OCI-LY7 (cell line): ENCODE measurements at regions of chr2 and their contacts with region 1.

Region 1: GRCh38 chr2:38602732-38603401 is at the start of gene HNRNPLL:
- DNase-seq: peak; percentile 94
- H3K4me3 ChIP-seq: peak within 1 kb of the TSS; percentile 81
- H3K27ac ChIP-seq: peak within 1 kb of the TSS; percentile 41
- H3K4me1 ChIP-seq: peaks cover 57% of the 10 kb centered on the region
- CTCF ChIP-seq: no peak
- total RNA-seq, gene HNRNPLL: 7.2 and 7.6 TPM in 2 replicates

Region 2: GRCh38 chr2:38214209-38214717 is 388.6 kb before region 1 on chr2:
- CTCF ChIA-PET with region 1: no interaction called
- POLR2A ChIA-PET with region 1: no interaction called
- intact Hi-C with region 1: no loop called
- DNase-seq: no peak
- H3K4me3 ChIP-seq: no peak overlapping the region
- H3K27ac ChIP-seq: no peak overlapping the region
- H3K4me1 ChIP-seq: no peaks in the 10 kb centered on the region
- CTCF ChIP-seq: no peak

Region 3: DNA sequence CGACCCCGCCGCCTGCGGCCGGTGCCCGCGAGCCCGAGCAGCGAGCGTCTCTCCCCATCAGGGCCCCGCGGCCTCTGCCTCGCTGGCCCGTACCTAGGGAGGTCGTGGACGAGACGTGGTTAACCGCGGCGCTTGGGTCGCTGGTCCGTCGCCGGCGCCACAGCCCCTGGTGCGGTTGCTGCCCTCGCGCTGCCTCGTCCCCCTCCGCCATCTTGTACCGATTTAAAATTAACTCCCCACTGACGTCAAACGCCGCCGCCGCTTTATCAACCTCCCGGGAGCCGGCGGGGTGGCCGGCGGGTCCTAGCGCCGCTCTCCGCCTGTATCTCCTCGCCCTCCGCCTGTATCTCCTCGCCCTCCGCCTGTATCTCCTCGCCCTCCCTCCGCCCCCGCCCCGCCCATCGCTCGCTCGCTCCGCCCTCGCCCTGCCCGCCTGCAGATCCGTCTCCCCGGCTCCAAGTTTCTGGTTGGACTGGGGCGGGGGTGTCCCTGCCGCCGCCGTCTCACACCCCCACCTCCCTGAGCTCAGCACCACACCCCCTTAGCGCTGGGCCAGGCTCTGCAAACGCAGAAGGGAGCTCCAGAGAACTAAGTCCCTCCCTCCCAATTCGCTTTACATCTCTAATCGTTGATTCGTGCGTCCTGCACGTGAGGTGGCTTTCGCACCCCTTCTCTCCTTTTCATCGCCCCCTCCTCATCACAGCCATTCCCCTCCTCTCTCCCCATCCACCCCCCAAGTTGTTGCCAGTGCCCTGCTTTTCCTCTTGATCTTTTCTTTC is 225.6 kb before region 1 on chr2 and contains the start of gene ATL2:
- CTCF ChIA-PET with region 1: no interaction called
- POLR2A ChIA-PET with region 1: interaction called, 4 read pairs
- intact Hi-C with region 1: loop called (anchors 2 kb)
- DNase-seq: peak; percentile 96
- H3K4me3 ChIP-seq: peak within 1 kb of the TSS; percentile 88
- H3K27ac ChIP-seq: peak within 1 kb of the TSS; percentile 69
- H3K4me1 ChIP-seq: peaks cover 65% of the 10 kb centered on the region
- CTCF ChIP-seq: no peak
- total RNA-seq, gene ATL2: 142 and 166 TPM in 2 replicates

Region 4: DNA sequence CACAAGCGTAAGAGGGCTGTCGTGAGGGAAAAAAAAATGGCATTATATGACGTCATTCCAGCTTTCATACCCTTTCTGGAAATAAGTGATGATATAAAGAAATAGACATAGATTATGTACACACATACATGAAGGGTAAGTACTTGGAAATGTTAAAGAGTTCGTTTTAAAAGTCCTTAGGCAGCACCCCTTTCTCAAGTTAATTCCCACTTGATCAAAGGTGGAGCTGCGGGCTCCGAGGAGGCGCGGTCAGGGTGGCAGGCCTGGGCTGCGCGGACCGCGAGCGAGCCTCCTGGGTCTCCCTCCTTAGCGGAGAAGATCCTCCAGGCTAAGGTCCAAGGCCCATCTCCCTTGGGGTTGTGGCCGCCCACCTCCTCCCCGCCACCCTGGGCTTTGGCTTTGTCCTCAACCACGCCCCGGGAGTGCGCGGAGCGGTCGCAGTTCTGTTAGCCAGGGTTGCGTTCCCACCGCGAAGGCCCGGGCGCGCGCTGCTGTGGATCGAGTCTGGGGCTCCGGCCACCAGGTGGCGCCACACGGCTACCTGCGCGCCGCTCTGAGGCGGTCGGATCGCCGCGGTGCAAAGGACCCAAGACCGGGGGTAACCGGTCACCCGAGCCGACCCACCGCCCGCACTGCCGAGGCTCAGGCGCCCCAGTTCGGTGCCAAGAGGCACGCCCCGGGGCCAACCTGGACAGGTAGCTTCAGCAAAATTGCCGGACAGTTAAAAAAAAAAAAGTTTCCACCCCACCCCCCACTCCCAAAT is 66.9 kb before region 1 on chr2:
- CTCF ChIA-PET with region 1: no interaction called
- POLR2A ChIA-PET with region 1: interaction called, 13 read pairs
- intact Hi-C with region 1: loop called (anchors 2 kb)
- DNase-seq: peak; percentile 87
- H3K4me3 ChIP-seq: peak overlapping the region; percentile 62
- H3K27ac ChIP-seq: no peak overlapping the region
- H3K4me1 ChIP-seq: peaks cover 43% of the 10 kb centered on the region
- CTCF ChIP-seq: peak; percentile 87

Region 5: GRCh38 chr2:38634684-38635083 is 31.8 kb after region 1 on chr2:
- CTCF ChIA-PET with region 1: no interaction called
- POLR2A ChIA-PET with region 1: interaction called, 4 read pairs
- intact Hi-C with region 1: loop called (anchors 1 kb)
- DNase-seq: peak; percentile 65
- H3K4me3 ChIP-seq: peak overlapping the region; percentile 22
- H3K27ac ChIP-seq: peak overlapping the region; percentile 0
- H3K4me1 ChIP-seq: peaks cover 29% of the 10 kb centered on the region
- CTCF ChIP-seq: no peak

Region 6: DNA sequence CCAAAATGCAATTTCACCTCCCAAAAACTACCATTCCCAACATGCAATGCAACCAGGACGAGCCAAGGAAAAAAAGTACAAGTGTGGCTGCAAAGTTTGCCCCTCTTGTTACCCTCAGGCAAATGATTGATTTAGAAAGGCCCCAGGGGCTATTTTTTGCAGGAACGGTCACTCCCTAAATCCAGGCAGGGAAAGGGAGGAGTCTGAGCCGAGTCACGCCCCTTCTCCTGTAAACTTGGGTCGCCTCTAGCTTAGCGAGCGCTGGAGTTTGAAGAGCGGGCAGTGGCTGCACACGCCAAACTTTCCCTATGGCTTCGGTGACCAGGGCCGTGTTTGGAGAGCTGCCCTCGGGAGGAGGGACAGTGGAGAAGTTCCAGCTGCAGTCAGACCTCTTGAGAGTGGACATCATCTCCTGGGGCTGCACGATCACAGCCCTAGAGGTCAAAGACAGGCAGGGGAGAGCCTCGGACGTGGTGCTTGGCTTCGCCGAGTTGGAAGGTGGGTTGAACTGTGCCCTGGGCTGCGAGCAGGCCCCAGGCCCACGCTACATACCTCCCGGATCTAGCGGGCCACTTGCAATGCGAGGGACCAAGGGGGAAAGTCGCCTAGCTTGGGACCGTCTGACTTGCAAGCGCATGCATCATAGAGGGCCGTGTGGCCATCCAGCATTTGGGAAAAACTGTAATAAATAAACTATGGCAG is 63.1 kb after region 1 on chr2 and contains the start of gene GALM:
- CTCF ChIA-PET with region 1: interaction called, 4 read pairs
- POLR2A ChIA-PET with region 1: interaction called, 7 read pairs
- intact Hi-C with region 1: loop called (anchors 1 kb)
- DNase-seq: peak; percentile 70
- H3K4me3 ChIP-seq: peak within 1 kb of the TSS; percentile 70
- H3K27ac ChIP-seq: peak within 1 kb of the TSS; percentile 5
- H3K4me1 ChIP-seq: peaks cover 8% of the 10 kb centered on the region
- CTCF ChIP-seq: no peak
- total RNA-seq, gene GALM: 2.9 and 5.5 TPM in 2 replicates

Region 7: DNA sequence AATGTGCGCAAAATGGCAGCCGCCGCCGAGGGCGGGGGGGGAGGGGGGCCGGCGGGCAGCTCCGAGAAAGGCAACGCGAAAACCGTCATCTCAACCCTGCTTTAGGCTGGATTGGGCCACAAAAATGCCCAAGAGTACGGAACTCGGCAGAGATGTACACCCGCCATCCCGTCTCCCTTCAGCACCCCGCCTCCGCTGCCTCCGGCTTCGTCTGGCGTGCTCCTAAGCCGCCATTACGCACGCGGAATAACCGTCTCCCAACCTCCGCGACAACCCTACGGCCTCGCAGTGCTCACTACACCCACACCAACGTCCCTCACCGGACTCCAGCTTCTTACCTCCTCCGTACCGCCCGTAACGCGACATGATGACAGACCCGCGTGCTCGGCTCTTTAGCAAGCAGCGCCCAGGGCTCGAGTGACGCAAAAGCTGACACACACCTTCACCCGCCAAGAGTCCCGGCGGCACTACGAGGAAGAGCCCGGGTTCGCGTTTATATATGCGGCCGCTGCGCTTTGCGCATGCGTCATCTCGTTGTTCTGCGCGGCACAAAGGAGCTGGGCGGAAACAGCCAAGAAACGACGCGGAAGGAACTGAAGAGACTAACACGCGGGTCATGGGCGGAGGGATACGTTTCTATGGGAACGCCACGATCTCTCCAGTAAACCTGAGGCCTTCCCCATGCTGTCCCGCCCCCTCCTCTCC is 148.2 kb after region 1 on chr2 and contains the start of gene SRSF7:
- CTCF ChIA-PET with region 1: interaction called, 3 read pairs
- POLR2A ChIA-PET with region 1: interaction called, 14 read pairs
- intact Hi-C with region 1: no loop called
- DNase-seq: peak; percentile 98
- H3K4me3 ChIP-seq: peak within 1 kb of the TSS; percentile 88
- H3K27ac ChIP-seq: peak within 1 kb of the TSS; percentile 80
- H3K4me1 ChIP-seq: peaks cover 55% of the 10 kb centered on the region
- CTCF ChIP-seq: no peak
- total RNA-seq, gene SRSF7: 316 and 337 TPM in 2 replicates

Region 8: DNA sequence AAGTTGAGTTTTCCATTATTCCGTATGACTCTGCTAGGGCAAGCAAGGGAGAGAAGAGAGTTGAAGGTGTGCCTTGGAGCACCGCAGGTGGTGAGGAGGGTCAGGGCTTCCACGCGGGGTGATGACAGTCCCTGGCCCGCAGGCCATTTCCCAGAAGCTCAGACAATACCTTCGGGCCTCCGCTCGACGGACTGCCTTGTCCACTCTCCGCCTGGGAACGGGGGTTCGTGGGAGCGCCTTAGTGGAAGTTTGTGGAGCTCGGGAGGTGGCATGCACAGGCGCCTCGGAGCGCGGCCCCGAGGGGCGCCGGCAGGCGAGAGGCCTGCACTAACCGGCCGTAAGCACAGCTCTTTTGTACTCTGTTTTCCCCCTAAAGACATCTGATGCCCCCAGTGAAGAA is 356.6 kb after region 1 on chr2:
- CTCF ChIA-PET with region 1: no interaction called
- POLR2A ChIA-PET with region 1: no interaction called
- intact Hi-C with region 1: no loop called
- DNase-seq: no peak
- H3K4me3 ChIP-seq: no peak overlapping the region
- H3K27ac ChIP-seq: no peak overlapping the region
- H3K4me1 ChIP-seq: no peaks in the 10 kb centered on the region
- CTCF ChIP-seq: no peak

Region 9: GRCh38 chr2:39399570-39399969 is 796.7 kb after region 1 on chr2:
- CTCF ChIA-PET with region 1: interaction called, 17 read pairs
- POLR2A ChIA-PET with region 1: no interaction called
- intact Hi-C with region 1: no loop called
- DNase-seq: no peak
- H3K4me3 ChIP-seq: no peak overlapping the region
- H3K27ac ChIP-seq: no peak overlapping the region
- H3K4me1 ChIP-seq: peaks cover 20% of the 10 kb centered on the region
- CTCF ChIP-seq: no peak